A673 (cell line): ENCODE measurements at regions of chr12 and their contacts with region 1.

Region 1: GRCh38 chr12:120416490-120417216 is 21.3 kb upstream of the COX6A1 start:
- DNase-seq: no peak
- H3K4me3 ChIP-seq: no peak overlapping the region
- H3K27ac ChIP-seq: no peak overlapping the region
- H3K4me1 ChIP-seq: no peaks in the 10 kb centered on the region
- H3K27me3 ChIP-seq: no peaks in the 10 kb centered on the region
- CTCF ChIP-seq: no peak

Region 2: DNA sequence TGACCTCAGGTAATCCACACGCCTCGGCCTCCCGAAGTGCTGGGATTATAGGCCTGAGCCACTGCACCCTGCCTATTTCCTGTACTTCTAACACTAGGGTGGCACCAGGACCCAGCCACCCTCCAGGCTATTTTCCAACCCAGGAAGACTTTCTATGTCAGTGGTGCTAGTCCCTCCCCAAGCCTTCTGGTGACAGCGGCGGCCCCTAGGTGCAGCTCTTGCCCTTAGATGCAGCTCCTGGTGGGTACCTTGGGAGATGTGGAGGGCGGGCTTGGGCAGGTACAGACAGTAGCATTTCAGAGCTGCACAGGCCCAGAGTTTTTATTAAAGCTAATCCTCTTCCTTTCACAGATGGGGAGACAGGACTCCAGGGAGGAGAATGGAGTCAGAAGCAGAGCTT is 1372.6 kb before region 1 on chr12:
- CTCF ChIA-PET with region 1: no interaction called
- POLR2A ChIA-PET with region 1: no interaction called
- intact Hi-C with region 1: no loop called
- DNase-seq: no peak
- H3K4me3 ChIP-seq: no peak overlapping the region
- H3K27ac ChIP-seq: no peak overlapping the region
- H3K4me1 ChIP-seq: no peaks in the 10 kb centered on the region
- H3K27me3 ChIP-seq: peaks cover 6% of the 10 kb centered on the region
- CTCF ChIP-seq: no peak

Region 3: DNA sequence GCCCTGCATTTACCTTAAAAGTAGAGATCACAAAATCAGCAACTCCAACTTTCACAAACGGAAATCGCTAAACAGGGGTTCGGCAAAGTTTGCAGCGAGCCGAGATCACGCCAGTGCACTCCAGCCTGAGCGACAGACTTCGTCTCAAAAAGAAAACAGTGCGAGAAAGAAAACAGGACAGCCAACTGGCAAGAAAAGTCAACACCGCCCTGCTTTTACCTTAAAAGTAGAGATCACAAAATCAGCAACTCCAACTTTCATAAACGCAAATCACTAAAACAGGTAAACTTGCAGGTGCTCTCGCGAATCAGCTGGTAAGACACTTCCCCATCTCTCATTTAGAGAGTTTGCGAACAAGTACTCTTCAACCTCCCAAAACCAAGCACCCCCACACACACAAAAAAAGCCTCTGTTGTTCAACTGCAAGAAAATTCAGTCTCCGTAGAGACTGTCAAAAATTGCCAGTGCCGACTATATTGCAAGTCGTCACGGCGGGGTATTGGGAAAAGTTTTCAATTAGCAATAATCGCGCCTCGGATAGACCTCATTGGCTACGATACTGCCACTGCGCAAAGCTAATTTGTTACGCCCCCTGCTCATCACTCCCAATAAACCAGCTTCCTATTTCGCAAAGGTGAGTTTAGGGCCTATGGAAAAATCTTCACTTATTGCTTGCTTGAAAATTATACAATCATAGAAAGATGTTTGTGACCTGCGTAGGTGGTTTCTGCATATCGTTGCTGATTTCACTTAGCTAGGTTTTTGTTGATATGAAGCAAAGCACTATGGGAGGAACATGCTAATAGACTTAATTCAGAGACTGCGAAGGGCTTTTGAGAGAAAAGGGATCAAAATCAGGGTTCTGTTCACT is 123.8 kb before region 1 on chr12 and contains the start of gene RNU4-1:
- CTCF ChIA-PET with region 1: no interaction called
- POLR2A ChIA-PET with region 1: no interaction called
- intact Hi-C with region 1: no loop called
- DNase-seq: peak; percentile 98
- H3K4me3 ChIP-seq: peak within 1 kb of the TSS; percentile 54
- H3K27ac ChIP-seq: peak within 1 kb of the TSS; percentile 100
- H3K4me1 ChIP-seq: peaks cover 11% of the 10 kb centered on the region
- H3K27me3 ChIP-seq: no peaks in the 10 kb centered on the region
- CTCF ChIP-seq: no peak
- total RNA-seq, gene RNU4-1: 1,130 and 1,293 TPM in 2 replicates

Region 4: DNA sequence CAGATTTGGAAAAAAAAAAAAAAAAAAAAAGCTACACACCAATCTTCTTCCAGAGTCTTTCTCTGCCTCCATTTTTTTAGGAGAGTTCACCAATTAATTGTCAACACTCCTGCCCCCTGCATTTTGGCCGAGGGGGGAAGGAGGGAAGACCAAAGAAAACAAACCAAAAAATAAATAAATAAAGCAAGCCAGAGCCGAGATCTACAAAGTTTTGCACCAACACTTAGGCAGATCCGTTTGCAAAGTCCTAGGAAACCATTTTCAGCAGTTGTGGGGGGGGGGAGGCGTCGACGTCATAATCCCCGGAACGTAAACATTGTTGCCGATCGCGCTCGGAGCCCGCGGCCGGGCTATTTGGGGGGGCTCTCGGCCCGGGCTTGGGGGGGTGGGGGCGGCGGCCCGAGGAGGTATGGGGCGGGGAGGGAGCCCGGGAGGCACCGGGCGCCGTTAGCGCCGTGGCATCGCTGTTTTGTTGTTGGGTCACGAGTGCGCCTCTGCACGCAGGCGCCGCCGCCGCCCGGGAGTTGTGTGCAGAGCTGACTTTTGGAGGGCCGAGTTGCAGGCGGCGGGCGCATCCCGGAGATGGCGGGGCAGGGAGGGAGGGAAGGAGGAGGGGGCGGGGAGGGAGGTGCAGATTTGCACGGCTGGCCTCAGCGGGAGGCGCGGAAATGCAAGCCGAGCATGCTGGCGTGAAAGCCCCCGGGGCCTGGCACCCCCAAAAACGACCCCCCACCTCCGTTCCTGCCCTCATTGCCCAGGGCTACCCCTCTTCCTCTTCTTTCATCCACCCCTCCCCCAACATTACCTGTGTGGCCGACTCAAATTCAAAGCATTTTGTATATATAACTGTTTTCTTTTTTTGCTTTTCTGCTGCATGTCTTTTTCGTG is 1163.6 kb after region 1 on chr12:
- CTCF ChIA-PET with region 1: no interaction called
- POLR2A ChIA-PET with region 1: interaction called, 17 read pairs
- intact Hi-C with region 1: no loop called
- DNase-seq: peak; percentile 85
- H3K4me3 ChIP-seq: peak overlapping the region; percentile 80
- H3K27ac ChIP-seq: peak overlapping the region; percentile 88
- H3K4me1 ChIP-seq: peaks cover 45% of the 10 kb centered on the region
- H3K27me3 ChIP-seq: no peaks in the 10 kb centered on the region
- CTCF ChIP-seq: no peak